H1 (cell line): ENCODE measurements at regions of chr5 and their contacts with region 1.

Region 1: GRCh38 chr5:132064738-132065331 is 4.4 kb downstream of the IL3 start:
- DNase-seq: peak; percentile 65 to 97
- H3K4me3 ChIP-seq: no peak overlapping the region
- H3K27ac ChIP-seq: no peak overlapping the region
- H3K4me1 ChIP-seq: no peaks in the 10 kb centered on the region; a peak in 1 of 7 replicates
- H3K27me3 ChIP-seq: no peaks in the 10 kb centered on the region
- CTCF ChIP-seq: peak in 2 of 3 experiments; percentile 88 to 98; a peak in 3 of 4 replicates
- EP300 ChIP-seq: no peak
- POLR2A ChIP-seq: no peak
- RAD21 ChIP-seq: peak; percentile 73 to 80

Region 2: DNA sequence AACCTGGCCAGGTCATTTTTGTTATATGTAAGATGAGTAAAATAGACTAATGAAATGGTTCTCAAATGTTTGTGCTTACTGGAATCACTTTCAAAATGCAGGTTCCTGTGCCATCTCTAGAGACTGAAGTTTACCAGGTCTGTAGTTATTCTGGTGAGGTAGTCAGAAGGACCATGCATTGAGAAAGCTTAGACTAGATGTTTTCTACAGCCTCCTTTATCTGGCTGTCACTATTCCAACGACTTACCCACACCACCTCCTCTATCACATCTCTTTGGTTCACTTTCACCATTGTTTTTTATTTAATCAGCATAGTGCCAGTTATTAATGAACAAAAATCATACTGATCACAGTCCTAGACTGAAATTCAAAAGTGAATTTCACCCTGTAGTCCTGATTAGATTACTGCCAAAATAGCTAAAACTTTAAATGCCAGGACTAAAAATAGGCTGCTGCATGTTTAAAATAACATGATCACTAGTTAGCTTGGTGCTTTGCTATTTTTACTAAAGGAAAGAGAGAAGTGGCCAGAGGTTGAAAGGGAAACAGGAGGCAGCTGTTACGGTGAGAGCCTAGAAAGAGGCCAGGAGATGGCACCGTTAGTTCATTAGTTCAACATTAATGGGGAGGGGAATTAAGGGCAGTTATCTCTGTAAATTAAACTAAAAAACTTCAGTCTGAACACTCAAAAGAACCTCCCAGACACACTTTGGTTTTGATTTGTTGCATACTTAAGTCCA is 254.2 kb before region 1 on chr5:
- CTCF ChIA-PET with region 1: interaction called, 39 read pairs
- POLR2A ChIA-PET with region 1: no interaction called
- DNase-seq: no peak
- H3K4me3 ChIP-seq: no peak overlapping the region
- H3K27ac ChIP-seq: no peak overlapping the region
- H3K4me1 ChIP-seq: 0 out of 7 replicates have a peak, but pooled peaks cover 0 to 2% (median 0%) of the 10 kb centered on the region in 4 experiments
- H3K27me3 ChIP-seq: no peaks in the 10 kb centered on the region
- CTCF ChIP-seq: peak in 2 of 3 experiments; percentile 53 to 64; a peak in 3 of 4 replicates
- EP300 ChIP-seq: no peak
- POLR2A ChIP-seq: no peak
- RAD21 ChIP-seq: peak; percentile 86 to 87

Region 3: DNA sequence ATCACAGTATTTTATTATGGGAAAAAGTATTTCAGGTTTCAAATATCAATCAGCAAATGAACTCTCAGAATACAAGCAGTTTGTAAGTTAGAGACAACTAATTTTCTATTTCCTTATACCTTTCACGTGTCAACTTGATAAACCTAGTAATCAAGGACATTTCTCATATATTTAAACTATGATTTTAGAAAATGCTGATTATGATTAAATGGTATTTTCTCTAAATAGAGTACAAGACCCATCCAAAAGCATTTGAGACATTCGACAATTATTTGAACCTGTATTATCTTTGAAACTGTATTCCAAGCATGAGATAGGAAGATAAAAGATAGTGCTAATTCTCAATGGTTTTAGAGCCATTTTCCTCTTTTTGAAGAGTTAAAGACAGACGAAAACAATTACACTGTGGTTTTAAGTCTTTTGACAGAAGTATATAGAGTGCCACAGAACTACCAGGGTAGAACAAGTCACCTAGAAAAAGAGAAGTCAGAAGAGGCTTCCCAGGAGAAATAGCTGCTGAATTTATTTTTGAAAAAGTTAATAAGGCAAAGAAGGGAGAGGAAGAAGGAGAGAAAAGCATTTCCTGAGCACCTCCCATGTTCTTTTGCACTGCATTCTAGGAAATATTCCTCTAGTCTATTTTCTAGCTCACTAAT is 125.0 kb before region 1 on chr5:
- CTCF ChIA-PET with region 1: no interaction called
- POLR2A ChIA-PET with region 1: no interaction called
- DNase-seq: no peak
- H3K4me3 ChIP-seq: no peak overlapping the region
- H3K27ac ChIP-seq: no peak overlapping the region
- H3K4me1 ChIP-seq: no peaks in the 10 kb centered on the region
- H3K27me3 ChIP-seq: no peaks in the 10 kb centered on the region
- CTCF ChIP-seq: no peak
- EP300 ChIP-seq: no peak
- POLR2A ChIP-seq: no peak
- RAD21 ChIP-seq: no peak

Region 4: GRCh38 chr5:132050136-132050535 is 14.7 kb before region 1 on chr5:
- CTCF ChIA-PET with region 1: interaction called, 31 read pairs
- POLR2A ChIA-PET with region 1: no interaction called
- DNase-seq: peak in 1 of 2 experiments; percentile 30
- H3K4me3 ChIP-seq: no peak overlapping the region
- H3K27ac ChIP-seq: no peak overlapping the region
- H3K4me1 ChIP-seq: peaks cover 0 to 5% (median 1%) of the 10 kb centered on the region in 4 experiments; a peak in 2 of 7 replicates
- H3K27me3 ChIP-seq: no peaks in the 10 kb centered on the region
- CTCF ChIP-seq: no peak
- EP300 ChIP-seq: no peak
- POLR2A ChIP-seq: no peak
- RAD21 ChIP-seq: no peak

Region 5: DNA sequence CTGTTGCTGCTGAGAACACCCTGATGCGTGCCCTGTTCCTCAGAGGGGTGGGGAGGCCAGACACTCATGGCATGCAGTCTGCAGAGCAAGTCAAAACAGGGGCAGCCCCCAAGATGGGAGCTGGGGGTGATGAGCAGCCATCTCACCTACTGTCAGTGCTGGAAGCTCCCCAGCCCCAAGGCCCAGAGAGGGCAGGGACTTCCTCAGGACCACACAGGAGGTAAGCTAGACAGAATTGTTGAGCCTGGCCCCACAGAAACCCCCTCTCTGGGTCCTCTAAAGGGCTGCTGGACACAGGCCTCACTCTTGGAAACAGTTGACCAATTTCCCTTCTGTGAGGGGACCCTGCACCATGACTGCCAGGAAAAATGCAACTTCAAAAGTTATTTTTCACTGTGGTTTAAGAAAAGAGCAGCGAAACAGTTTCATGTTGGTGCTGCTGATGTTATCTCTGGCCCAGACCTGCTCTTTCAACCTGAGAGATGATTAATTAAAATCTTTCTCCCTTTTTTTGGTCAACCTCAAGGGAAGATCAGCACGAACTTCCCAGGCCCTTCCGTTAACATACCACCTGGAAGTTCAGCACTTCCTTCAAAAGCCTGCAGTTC is 18.3 kb after region 1 on chr5:
- CTCF ChIA-PET with region 1: interaction called, 20 read pairs
- POLR2A ChIA-PET with region 1: no interaction called
- DNase-seq: no peak
- H3K4me3 ChIP-seq: no peak overlapping the region
- H3K27ac ChIP-seq: no peak overlapping the region
- H3K4me1 ChIP-seq: no peaks in the 10 kb centered on the region
- H3K27me3 ChIP-seq: no peaks in the 10 kb centered on the region
- CTCF ChIP-seq: no peak
- EP300 ChIP-seq: no peak
- POLR2A ChIP-seq: no peak
- RAD21 ChIP-seq: no peak

Region 6: DNA sequence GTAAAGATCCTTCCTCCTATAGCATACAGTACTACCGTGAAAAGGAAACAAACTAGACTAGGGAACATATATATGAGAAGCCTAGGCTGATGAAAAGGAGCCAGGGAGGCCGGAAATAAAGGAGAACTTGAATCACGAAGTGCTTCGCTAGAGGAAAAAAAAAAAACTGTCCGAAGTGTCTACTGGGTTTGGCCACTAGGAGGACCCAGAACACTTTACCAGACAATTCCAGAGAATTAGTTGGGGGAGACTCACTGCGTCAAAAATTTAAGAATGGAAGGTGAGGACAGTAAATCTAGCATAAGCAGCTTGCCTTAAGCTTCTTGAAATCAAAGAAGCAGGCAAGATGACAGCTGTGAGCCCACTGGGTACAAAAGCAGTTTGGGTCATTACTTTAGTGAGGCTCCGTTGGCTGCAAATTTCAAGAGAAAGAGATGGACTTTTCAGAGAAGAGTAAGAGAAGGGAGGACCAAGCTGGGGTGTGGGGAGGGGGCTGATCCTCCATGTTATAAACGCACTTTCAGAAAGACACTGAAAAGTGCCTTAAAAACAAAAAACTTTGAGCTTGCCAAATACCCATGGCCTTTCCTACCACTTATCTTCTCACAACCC is 115.4 kb after region 1 on chr5:
- CTCF ChIA-PET with region 1: interaction called, 42 read pairs
- POLR2A ChIA-PET with region 1: no interaction called
- DNase-seq: no peak
- H3K4me3 ChIP-seq: no peak overlapping the region
- H3K27ac ChIP-seq: no peak overlapping the region
- H3K4me1 ChIP-seq: peaks cover 0 to 7% (median 4%) of the 10 kb centered on the region in 4 experiments; a peak in 6 of 7 replicates
- H3K27me3 ChIP-seq: no peaks in the 10 kb centered on the region; a peak in 2 of 7 replicates
- CTCF ChIP-seq: peak in 2 of 3 experiments; percentile 73 to 76; a peak in 3 of 4 replicates
- EP300 ChIP-seq: no peak
- POLR2A ChIP-seq: no peak
- RAD21 ChIP-seq: peak; percentile 69 to 79